ENCODE measurements at regions of chr3 and their contacts with region 1.

Region 1: DNA sequence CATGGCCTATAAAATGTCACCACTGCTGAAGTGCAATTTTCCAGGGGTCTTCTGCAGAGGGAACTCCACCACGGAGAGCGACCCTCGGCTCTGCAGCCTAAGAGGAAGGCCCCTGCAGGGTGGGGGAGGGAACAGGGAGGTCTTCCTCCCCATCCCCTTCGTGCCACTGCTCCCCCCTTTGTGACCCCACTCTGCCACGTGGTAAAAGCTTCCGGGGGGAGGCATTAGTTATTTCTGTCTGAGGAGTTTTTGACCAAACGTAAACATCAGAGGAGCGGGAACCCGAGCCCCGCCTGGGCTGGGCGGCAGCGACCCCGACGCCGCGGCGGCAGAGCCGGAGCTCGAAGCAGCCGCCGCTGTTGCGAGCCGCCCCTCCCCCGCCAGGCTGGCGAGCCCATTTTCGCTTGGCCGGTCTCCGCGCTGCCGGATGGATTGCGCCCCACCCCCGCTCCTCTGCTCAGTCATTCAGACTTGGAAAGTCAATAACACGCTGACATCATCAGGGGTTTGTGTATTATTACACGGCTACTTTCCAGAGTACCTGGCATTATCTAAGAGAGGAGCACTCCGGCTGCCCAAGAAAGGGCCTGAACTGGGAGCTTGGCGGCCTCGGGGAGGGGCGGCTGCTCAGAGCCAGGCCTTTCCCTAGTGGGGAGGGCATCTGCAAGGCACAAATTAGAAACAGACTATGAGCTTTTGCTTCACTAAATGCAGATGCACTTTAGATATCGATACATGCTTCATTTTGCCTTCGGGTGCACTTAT is 162.5 kb upstream of the TBL1XR1 start:
- DNase-seq: peak; percentile 92 to 98 (median 96)
- ATAC-seq: peak; percentile 86
- H3K4me3 ChIP-seq: peak overlapping the region; percentile 60
- H3K4me3 Mint-ChIP-seq: peak overlapping the region; percentile 98
- H3K27ac ChIP-seq: peak overlapping the region; percentile 94 to 98
- H3K27ac Mint-ChIP-seq: peak overlapping the region; percentile 100
- H3K4me1 ChIP-seq: peaks cover 44% of the 10 kb centered on the region
- H3K4me1 Mint-ChIP-seq: peaks cover 57% of the 10 kb centered on the region
- H3K27me3 ChIP-seq: no peaks in the 10 kb centered on the region
- H3K27me3 Mint-ChIP-seq: peaks cover 13% of the 10 kb centered on the region
- CTCF ChIP-seq: no peak

Region 2: DNA sequence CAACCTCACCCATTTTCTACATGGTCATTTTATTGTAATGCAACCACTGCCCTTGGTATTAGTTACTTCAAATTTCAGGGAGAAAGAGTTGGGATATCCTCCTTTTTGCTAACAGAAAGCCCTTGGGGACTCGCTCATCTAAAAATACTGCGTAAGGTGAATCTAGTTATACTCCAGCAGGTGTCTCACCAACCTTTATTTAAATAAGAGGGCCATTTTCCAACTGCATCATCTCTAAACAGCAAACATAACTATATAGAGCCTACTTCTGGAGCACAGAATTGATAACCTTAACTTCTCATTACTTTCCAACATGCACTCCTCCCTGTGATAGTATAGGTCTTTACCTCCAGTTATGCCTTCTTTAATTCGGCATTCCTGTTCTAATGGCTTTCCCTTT is 239.9 kb before region 1 on chr3:
- CTCF ChIA-PET with region 1: interaction called, 3 read pairs
- POLR2A ChIA-PET with region 1: interaction called, 5 read pairs
- intact Hi-C with region 1: loop called (anchors 5 to 10 kb)
- DNase-seq: peak in 2 of 14 experiments; percentile 28 to 32
- ATAC-seq: peak; percentile 80
- H3K4me3 ChIP-seq: no peak overlapping the region
- H3K4me3 Mint-ChIP-seq: no peak overlapping the region
- H3K27ac ChIP-seq: no peak overlapping the region
- H3K27ac Mint-ChIP-seq: peak overlapping the region; percentile 19
- H3K4me1 ChIP-seq: peaks cover 3% of the 10 kb centered on the region
- H3K4me1 Mint-ChIP-seq: peaks cover 93% of the 10 kb centered on the region
- H3K27me3 ChIP-seq: no peaks in the 10 kb centered on the region
- H3K27me3 Mint-ChIP-seq: no peaks in the 10 kb centered on the region
- CTCF ChIP-seq: no peak

Region 3: GRCh38 chr3:177197041-177197727 is 162.6 kb before region 1 on chr3 and contains the start of gene TBL1XR1:
- CTCF ChIA-PET with region 1: interaction called, 14 read pairs
- POLR2A ChIA-PET with region 1: interaction called, 523 read pairs
- intact Hi-C with region 1: loop called (anchors 1 kb)
- DNase-seq: peak; percentile 79 to 95 (median 87)
- ATAC-seq: peak; percentile 45
- H3K4me3 ChIP-seq: peak within 1 kb of the TSS; percentile 95
- H3K4me3 Mint-ChIP-seq: peak within 1 kb of the TSS; percentile 97
- H3K27ac ChIP-seq: peak within 1 kb of the TSS; percentile 82 to 98
- H3K27ac Mint-ChIP-seq: peak within 1 kb of the TSS; percentile 87
- H3K4me1 ChIP-seq: peaks cover 54% of the 10 kb centered on the region
- H3K4me1 Mint-ChIP-seq: peaks cover 59% of the 10 kb centered on the region
- H3K27me3 ChIP-seq: no peaks in the 10 kb centered on the region
- H3K27me3 Mint-ChIP-seq: no peaks in the 10 kb centered on the region
- CTCF ChIP-seq: no peak
- total RNA-seq, gene TBL1XR1: 63.2 to 67.8 TPM

Region 4: GRCh38 chr3:177426878-177427495 is 67.2 kb after region 1 on chr3:
- CTCF ChIA-PET with region 1: no interaction called
- POLR2A ChIA-PET with region 1: interaction called, 13 read pairs
- intact Hi-C with region 1: no loop called
- DNase-seq: peak in 6 of 14 experiments; percentile 14 to 77 (median 54)
- ATAC-seq: peak; percentile 78
- H3K4me3 ChIP-seq: peak overlapping the region; percentile 9
- H3K4me3 Mint-ChIP-seq: peak overlapping the region; percentile 32
- H3K27ac ChIP-seq: peak overlapping the region in 1 of 2 donors; percentile 58
- H3K27ac Mint-ChIP-seq: peak overlapping the region; percentile 78
- H3K4me1 ChIP-seq: peaks cover 17% of the 10 kb centered on the region
- H3K4me1 Mint-ChIP-seq: peaks cover 32% of the 10 kb centered on the region
- H3K27me3 ChIP-seq: no peaks in the 10 kb centered on the region
- H3K27me3 Mint-ChIP-seq: no peaks in the 10 kb centered on the region
- CTCF ChIP-seq: no peak

Region 5: GRCh38 chr3:177516158-177517011 is 156.6 kb after region 1 on chr3:
- CTCF ChIA-PET with region 1: no interaction called
- POLR2A ChIA-PET with region 1: no interaction called
- intact Hi-C with region 1: no loop called
- DNase-seq: no peak
- ATAC-seq: no peak
- H3K4me3 ChIP-seq: no peak overlapping the region
- H3K4me3 Mint-ChIP-seq: no peak overlapping the region
- H3K27ac ChIP-seq: no peak overlapping the region
- H3K27ac Mint-ChIP-seq: no peak overlapping the region
- H3K4me1 ChIP-seq: no peaks in the 10 kb centered on the region
- H3K4me1 Mint-ChIP-seq: no peaks in the 10 kb centered on the region
- H3K27me3 ChIP-seq: no peaks in the 10 kb centered on the region
- H3K27me3 Mint-ChIP-seq: no peaks in the 10 kb centered on the region
- CTCF ChIP-seq: no peak

Region 6: DNA sequence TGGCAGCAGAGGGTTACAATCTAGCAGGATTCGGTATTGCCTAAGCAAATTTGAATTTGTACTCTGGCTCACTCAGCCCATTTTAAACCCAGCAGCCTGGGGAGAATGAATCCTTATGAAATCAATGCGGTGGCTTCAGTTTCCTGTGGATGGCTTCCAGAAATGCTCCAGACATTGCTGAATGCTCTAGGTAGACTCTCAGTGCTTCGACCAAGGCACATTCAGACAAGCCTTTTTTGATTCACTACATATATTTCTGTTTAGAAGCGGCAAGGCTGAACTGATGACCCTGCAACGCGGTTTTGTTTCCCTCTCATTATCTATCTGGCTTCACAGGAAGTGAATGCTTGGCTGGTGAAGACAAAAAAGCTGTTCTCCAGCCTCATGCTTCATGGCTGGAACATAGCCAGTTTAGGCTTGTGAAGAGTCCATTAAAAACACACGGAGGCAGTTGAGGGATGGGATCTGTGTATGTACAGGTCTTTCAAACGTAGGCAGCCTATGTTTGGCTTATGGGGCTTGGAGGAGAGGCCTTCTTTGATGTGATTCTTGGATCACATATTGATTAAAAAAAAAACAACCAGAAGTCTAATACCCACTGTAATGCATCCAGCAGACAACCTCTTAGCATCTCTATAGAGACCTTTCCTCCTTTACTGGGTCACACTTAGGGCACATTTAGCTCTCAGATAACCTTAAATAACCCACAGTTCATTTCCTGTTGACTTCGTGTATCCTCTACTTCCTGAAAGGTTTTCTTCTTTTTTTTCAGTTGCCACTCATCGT is 237.7 kb after region 1 on chr3:
- CTCF ChIA-PET with region 1: no interaction called
- POLR2A ChIA-PET with region 1: interaction called, 27 read pairs
- intact Hi-C with region 1: loop called (anchors 5 to 10 kb)
- DNase-seq: peak in 7 of 14 experiments; percentile 3 to 85 (median 29)
- ATAC-seq: peak; percentile 93
- H3K4me3 ChIP-seq: peak overlapping the region; percentile 8
- H3K4me3 Mint-ChIP-seq: peak overlapping the region; percentile 83
- H3K27ac ChIP-seq: peak overlapping the region; percentile 67 to 79
- H3K27ac Mint-ChIP-seq: peak overlapping the region; percentile 96
- H3K4me1 ChIP-seq: peaks cover 37% of the 10 kb centered on the region
- H3K4me1 Mint-ChIP-seq: peaks cover 84% of the 10 kb centered on the region
- H3K27me3 ChIP-seq: no peaks in the 10 kb centered on the region
- H3K27me3 Mint-ChIP-seq: no peaks in the 10 kb centered on the region
- CTCF ChIP-seq: no peak

Region 7: GRCh38 chr3:177694316-177694715 is 334.5 kb after region 1 on chr3:
- CTCF ChIA-PET with region 1: no interaction called
- POLR2A ChIA-PET with region 1: no interaction called
- intact Hi-C with region 1: no loop called
- DNase-seq: no peak
- ATAC-seq: no peak
- H3K4me3 ChIP-seq: no peak overlapping the region
- H3K4me3 Mint-ChIP-seq: no peak overlapping the region
- H3K27ac ChIP-seq: no peak overlapping the region
- H3K27ac Mint-ChIP-seq: no peak overlapping the region
- H3K4me1 ChIP-seq: no peaks in the 10 kb centered on the region
- H3K4me1 Mint-ChIP-seq: peaks cover 9% of the 10 kb centered on the region
- H3K27me3 ChIP-seq: no peaks in the 10 kb centered on the region
- H3K27me3 Mint-ChIP-seq: no peaks in the 10 kb centered on the region
- CTCF ChIP-seq: no peak

Region 8: DNA sequence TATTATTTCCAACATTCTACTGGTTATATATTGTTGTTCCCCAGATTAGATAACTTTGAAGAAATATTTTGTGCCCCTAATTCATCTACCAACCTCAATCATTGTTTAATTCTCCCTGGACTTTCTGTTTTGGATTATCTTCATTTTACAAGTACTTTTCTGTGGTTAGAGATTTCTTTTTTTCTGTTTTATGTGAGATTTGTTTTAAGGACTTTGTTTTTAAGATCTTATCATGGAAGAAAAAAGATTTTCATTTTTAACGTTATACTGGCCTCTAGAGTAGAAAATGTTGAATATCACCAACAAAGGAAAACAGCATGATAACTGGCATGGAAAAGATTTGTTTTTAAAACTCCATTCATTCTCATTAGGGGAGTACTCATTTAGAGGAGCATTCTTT is 965.6 kb after region 1 on chr3:
- CTCF ChIA-PET with region 1: no interaction called
- POLR2A ChIA-PET with region 1: interaction called, 3 read pairs
- intact Hi-C with region 1: loop called in 1 of 2 experiments (anchors 10 kb)
- DNase-seq: peak in 1 of 14 experiments; percentile 22
- ATAC-seq: no peak
- H3K4me3 ChIP-seq: no peak overlapping the region
- H3K4me3 Mint-ChIP-seq: no peak overlapping the region
- H3K27ac ChIP-seq: no peak overlapping the region
- H3K27ac Mint-ChIP-seq: no peak overlapping the region
- H3K4me1 ChIP-seq: no peaks in the 10 kb centered on the region
- H3K4me1 Mint-ChIP-seq: no peaks in the 10 kb centered on the region
- H3K27me3 ChIP-seq: no peaks in the 10 kb centered on the region
- H3K27me3 Mint-ChIP-seq: no peaks in the 10 kb centered on the region
- CTCF ChIP-seq: no peak